PC-9 (cell line): ENCODE measurements at regions of chr6 and their contacts with region 1.

Region 1: DNA sequence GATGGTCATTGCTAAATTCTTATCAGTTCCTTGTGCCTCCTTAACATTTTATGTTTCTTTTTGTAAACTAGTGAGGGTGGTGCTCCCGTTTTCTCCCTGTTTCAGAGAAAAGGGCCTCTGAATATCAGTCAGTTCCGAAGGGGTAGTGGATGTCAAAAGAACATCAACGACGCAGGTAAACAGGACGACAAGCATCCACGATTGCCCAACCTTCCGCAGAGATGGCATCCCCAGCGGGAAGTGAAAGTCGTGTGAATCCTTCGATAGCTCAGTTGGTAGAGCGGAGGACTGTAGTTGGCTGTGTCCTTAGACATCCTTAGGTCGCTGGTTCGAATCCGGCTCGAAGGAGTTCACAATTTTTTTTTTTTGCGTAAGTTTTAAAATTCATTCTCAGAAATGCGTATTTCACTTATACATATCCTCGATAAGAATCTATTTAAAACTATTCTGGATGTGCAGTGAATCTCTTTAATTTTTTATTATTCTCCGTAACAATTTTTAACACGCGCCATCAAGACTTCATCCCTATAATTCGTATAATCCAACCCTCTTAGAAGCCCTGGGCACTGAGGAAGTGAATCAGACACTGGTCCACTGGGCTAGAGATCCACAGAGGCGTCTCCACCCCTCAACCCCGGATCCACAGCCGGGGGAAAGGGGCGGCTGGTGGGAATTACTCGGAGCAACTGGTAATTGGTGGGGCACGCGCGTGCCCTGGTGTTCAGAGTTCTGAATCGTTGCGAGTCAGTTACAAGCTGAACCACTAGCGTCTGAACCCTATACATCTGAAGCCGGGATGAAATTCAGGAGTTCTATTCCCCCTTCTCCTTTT is 27.9 kb upstream of the ABT1 start:
- DNase-seq: peak; percentile 90 to 97
- H3K4me3 ChIP-seq: peak overlapping the region; percentile 59
- H3K27ac ChIP-seq: no peak overlapping the region
- H3K4me1 ChIP-seq: no peaks in the 10 kb centered on the region
- H3K27me3 ChIP-seq: no peaks in the 10 kb centered on the region
- CTCF ChIP-seq: peak; percentile 13; the same call in 1 of the 2 replicates

Region 2: GRCh38 chr6:26097268-26097875 is 471.4 kb before region 1 on chr6:
- CTCF ChIA-PET with region 1: interaction called, 15 read pairs
- POLR2A ChIA-PET with region 1: no interaction called
- intact Hi-C with region 1: no loop called
- DNase-seq: peak; percentile 53 to 61
- H3K4me3 ChIP-seq: no peak overlapping the region
- H3K27ac ChIP-seq: no peak overlapping the region
- H3K4me1 ChIP-seq: peaks cover 6% of the 10 kb centered on the region
- H3K27me3 ChIP-seq: no peaks in the 10 kb centered on the region
- CTCF ChIP-seq: peak; percentile 89

Region 3: DNA sequence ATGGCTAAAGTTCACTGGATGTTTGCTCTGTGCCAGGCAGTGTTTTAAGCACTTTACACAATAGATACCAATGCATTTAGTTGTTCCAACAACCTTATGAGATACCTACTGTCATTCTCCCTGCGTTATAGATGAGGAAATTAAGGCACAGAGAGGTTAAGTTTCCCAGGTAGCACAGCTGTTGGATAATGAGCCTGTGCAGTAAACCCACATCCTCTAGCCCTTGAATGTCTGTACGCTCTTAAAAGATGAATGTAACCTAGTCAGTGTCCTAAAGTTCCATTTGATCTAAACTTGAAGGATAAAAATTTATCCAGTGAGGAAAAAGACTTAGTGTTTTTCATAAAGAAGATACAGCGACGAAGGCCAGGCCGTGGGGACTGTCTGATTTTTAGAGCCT is 453.6 kb before region 1 on chr6:
- CTCF ChIA-PET with region 1: no interaction called
- POLR2A ChIA-PET with region 1: no interaction called
- intact Hi-C with region 1: no loop called
- DNase-seq: no peak
- H3K4me3 ChIP-seq: no peak overlapping the region
- H3K27ac ChIP-seq: no peak overlapping the region
- H3K4me1 ChIP-seq: 0 out of 2 replicates have a peak, but pooled peaks cover 1% of the 10 kb centered on the region
- H3K27me3 ChIP-seq: no peaks in the 10 kb centered on the region
- CTCF ChIP-seq: no peak

Region 4: GRCh38 chr6:26312501-26313390 is 256.1 kb before region 1 on chr6:
- CTCF ChIA-PET with region 1: interaction called, 13 read pairs
- POLR2A ChIA-PET with region 1: no interaction called
- intact Hi-C with region 1: no loop called
- DNase-seq: peak; percentile 74 to 77
- H3K4me3 ChIP-seq: peak overlapping the region; percentile 69
- H3K27ac ChIP-seq: peak overlapping the region; percentile 74
- H3K4me1 ChIP-seq: peaks cover 13% of the 10 kb centered on the region
- H3K27me3 ChIP-seq: no peaks in the 10 kb centered on the region
- CTCF ChIP-seq: no peak

Region 5: DNA sequence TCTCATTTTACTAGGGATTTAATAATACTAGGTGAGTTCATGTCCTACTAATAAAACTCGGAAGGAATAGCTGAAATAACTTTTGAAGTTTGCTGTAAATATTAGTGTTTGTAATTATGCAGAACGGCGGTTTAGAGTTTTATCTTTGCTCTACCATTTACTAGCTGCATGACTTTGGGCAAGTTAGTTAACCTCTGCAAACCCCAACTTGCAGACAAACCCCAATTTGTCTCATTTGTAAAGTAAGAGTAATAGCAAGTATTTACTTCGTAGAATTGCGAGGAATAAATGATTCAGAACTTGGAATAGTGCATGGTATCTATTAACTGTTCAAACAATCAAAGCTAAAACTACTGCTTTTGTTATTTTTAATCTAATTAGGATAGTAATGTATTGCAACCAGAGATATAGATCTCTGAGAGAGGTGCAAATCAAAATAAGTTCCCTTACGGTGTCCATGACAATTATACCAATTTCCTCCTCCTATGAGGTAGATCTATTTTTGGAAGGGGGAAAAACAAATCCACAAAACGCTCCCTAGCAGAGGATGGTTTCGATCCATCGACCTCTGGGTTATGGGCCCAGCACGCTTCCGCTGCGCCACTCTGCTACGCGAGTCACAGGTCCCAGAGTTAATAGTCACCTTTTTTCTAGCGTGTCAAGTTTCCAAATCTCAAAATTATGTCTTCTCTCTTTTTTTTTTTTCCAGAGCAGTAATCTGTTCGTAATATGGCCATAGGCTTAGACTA is 238.9 kb before region 1 on chr6:
- CTCF ChIA-PET with region 1: no interaction called
- POLR2A ChIA-PET with region 1: no interaction called
- intact Hi-C with region 1: loop called (anchors 1 kb)
- DNase-seq: peak; percentile 69 to 71
- H3K4me3 ChIP-seq: peak overlapping the region; percentile 85
- H3K27ac ChIP-seq: peak overlapping the region; percentile 66
- H3K4me1 ChIP-seq: peaks cover 34% of the 10 kb centered on the region; the same call in 1 of the 2 replicates
- H3K27me3 ChIP-seq: no peaks in the 10 kb centered on the region
- CTCF ChIP-seq: no peak

Region 6: DNA sequence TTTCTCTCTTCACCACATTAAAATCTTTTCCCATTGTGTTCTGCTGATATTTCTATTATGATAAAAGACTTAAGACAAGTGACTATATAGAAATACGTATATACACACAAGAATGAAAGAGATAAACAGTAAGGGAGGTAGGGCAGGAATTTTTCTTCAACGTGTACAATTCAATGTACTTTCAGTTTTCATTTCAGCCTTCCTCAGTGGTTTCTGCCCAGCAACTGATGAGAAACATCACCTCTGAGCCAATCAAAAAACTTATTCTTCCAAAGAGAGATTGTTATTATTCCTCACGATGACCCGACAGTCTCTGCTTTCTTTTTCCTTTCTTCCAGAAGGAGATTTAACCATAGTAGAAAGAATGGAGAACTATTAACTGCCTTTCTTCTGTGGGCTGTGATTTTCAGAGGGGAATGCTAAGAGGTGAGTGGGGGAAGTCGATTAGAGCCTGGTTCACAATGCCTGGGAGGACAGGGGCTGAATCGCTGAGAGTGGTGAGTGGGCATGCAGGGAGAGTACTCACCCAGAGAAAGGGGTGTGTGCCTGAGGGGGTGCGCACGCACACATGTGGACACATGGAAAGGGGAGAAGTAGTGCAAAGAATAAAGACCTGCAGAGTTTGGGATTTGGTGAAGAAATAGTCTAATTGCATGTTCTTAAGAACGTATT is 166.7 kb before region 1 on chr6 and contains the start of gene BTN3A1:
- CTCF ChIA-PET with region 1: no interaction called
- POLR2A ChIA-PET with region 1: no interaction called
- intact Hi-C with region 1: no loop called
- DNase-seq: peak; percentile 69 to 73
- H3K4me3 ChIP-seq: peak within 1 kb of the TSS; percentile 72
- H3K27ac ChIP-seq: peak within 1 kb of the TSS; percentile 67
- H3K4me1 ChIP-seq: peaks cover 14% of the 10 kb centered on the region
- H3K27me3 ChIP-seq: no peaks in the 10 kb centered on the region
- CTCF ChIP-seq: no peak
- total RNA-seq, gene BTN3A1: 28.3 and 30.4 TPM in 2 replicates

Region 7: GRCh38 chr6:26501482-26501986 is 67.3 kb before region 1 on chr6:
- CTCF ChIA-PET with region 1: no interaction called
- POLR2A ChIA-PET with region 1: no interaction called
- intact Hi-C with region 1: no loop called
- DNase-seq: no peak
- H3K4me3 ChIP-seq: no peak overlapping the region
- H3K27ac ChIP-seq: no peak overlapping the region
- H3K4me1 ChIP-seq: no peaks in the 10 kb centered on the region
- H3K27me3 ChIP-seq: no peaks in the 10 kb centered on the region
- CTCF ChIP-seq: no peak

Region 8: DNA sequence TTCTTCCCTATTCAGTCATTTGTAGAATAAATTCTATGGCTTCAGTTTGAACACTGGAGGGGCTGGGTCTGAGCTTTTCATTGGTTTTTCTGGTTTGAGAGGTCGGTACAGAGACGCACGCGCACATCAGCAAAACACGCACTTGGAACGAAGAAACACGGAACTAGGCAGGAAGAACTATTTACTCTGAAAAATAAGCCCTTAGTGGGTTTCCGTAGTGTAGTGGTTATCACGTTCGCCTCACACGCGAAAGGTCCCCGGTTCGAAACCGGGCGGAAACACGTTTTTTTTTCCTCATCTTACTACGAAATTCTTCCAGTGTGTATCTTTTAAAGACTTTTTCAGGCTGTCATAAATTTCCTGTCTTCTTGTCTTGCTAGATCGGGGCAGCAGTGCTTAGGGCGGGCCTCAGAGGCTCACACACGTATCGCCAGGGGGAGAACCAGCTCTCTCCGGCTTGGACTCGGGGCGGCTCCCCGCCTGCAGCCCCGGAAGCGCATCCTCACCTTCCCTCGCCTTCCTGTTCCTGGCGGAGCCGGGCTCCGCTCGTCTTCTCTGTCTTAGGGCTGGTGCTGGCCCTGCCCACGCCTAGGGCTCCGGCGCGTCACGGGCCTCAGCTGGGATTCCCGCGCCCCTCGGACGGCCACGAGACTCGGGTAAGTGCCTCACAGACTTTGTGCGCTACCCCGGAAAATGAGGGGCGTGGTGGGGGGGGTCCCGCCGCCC is 30.8 kb before region 1 on chr6 and contains the start of gene HMGN4:
- CTCF ChIA-PET with region 1: no interaction called
- POLR2A ChIA-PET with region 1: no interaction called
- intact Hi-C with region 1: loop called (anchors 1 kb)
- DNase-seq: peak; percentile 80 to 84
- H3K4me3 ChIP-seq: peak within 1 kb of the TSS; percentile 78
- H3K27ac ChIP-seq: peak within 1 kb of the TSS; percentile 78
- H3K4me1 ChIP-seq: peaks cover 18% of the 10 kb centered on the region
- H3K27me3 ChIP-seq: no peaks in the 10 kb centered on the region
- CTCF ChIP-seq: no peak
- total RNA-seq, gene HMGN4: 86.9 and 90.5 TPM in 2 replicates

Region 9: GRCh38 chr6:26553635-26554446 is 15.0 kb before region 1 on chr6:
- CTCF ChIA-PET with region 1: interaction called, 8 read pairs
- POLR2A ChIA-PET with region 1: interaction called, 3 read pairs
- intact Hi-C with region 1: loop called (anchors 1 kb)
- DNase-seq: peak; percentile 85 to 87
- H3K4me3 ChIP-seq: peak overlapping the region; percentile 69
- H3K27ac ChIP-seq: peak overlapping the region; percentile 60
- H3K4me1 ChIP-seq: peaks cover 31% of the 10 kb centered on the region
- H3K27me3 ChIP-seq: no peaks in the 10 kb centered on the region
- CTCF ChIP-seq: no peak

Region 10: GRCh38 chr6:26581164-26581915 is 12.5 kb after region 1 on chr6:
- CTCF ChIA-PET with region 1: no interaction called
- POLR2A ChIA-PET with region 1: no interaction called
- intact Hi-C with region 1: no loop called
- DNase-seq: no peak
- H3K4me3 ChIP-seq: no peak overlapping the region
- H3K27ac ChIP-seq: no peak overlapping the region
- H3K4me1 ChIP-seq: 0 out of 2 replicates have a peak, but pooled peaks cover 4% of the 10 kb centered on the region
- H3K27me3 ChIP-seq: no peaks in the 10 kb centered on the region
- CTCF ChIP-seq: no peak

Region 11: DNA sequence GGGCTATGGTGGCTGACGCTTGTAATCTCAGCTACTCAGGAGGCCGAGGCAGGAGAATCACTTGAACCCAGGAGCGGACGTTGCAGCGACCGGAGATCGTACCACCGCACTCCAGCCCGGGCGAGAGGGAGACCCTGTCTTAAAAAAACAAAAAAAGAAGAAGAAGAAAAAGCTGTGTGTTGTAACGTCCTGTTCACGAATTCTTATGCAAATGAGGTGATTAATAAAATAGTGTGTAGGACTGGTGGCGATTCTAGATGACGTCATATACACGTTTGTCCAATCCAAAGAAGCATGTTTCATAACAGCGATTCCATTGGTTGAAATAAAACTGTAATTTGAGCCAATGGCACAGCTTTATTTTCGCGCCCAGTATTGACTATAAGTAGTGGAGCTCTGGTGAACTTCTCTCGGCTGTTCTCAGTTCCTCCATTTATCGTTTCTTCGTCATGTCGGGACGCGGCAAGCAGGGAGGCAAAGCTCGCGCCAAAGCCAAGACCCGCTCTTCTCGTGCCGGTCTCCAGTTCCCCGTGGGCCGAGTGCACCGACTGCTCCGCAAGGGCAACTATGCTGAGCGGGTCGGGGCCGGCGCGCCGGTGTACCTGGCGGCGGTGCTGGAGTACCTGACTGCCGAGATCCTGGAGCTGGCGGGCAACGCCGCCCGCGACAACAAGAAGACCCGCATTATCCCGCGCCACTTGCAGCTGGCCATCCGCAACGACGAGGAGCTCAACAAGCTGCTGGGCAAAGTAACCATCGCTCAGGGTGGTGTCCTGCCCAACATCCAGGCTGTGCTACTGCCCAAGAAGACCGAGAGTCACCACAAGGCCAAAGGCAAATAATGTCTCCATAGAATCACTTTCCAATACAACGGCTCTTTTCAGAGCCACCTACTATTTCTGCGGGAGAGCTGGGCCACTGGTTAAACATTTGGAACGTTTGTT is 1296.4 kb after region 1 on chr6:
- CTCF ChIA-PET with region 1: no interaction called
- POLR2A ChIA-PET with region 1: interaction called, 13 read pairs
- intact Hi-C with region 1: no loop called
- DNase-seq: peak; percentile 67 to 80
- H3K4me3 ChIP-seq: peak overlapping the region; percentile 55
- H3K27ac ChIP-seq: 0 out of 2 replicates have a peak overlapping the region, but pooled peaks have one; percentile 34
- H3K4me1 ChIP-seq: no peaks in the 10 kb centered on the region
- H3K27me3 ChIP-seq: no peaks in the 10 kb centered on the region
- CTCF ChIP-seq: no peak